Heart left ventricle (tissue), 16 donors: ENCODE measurements at regions of chr5 and their contacts with region 1.

Region 1: GRCh38 chr5:142748568-142749249 is 21.5 kb upstream of the ARHGAP26 start:
- DNase-seq: peak in 3 of 5 donors; percentile 32 to 39 (median 35)
- ATAC-seq: peak in 3 of 4 donors; percentile 29 to 32 (median 30)
- H3K4me3 ChIP-seq: no peak overlapping the region
- H3K27ac ChIP-seq: no peak overlapping the region
- H3K4me1 ChIP-seq: peaks cover 8 to 79% (median 43%) of the 10 kb centered on the region in 12 donors
- H3K27me3 ChIP-seq: no peaks in the 10 kb centered on the region
- CTCF ChIP-seq: peak; percentile 31 to 70 (median 56)
- POLR2A ChIP-seq: no peak

Region 2: GRCh38 chr5:142888469-142889085 is 139.9 kb after region 1 on chr5:
- intact Hi-C with region 1: loop called in 2 of 10 experiments (anchors 10 kb)
- DNase-seq: no peak
- ATAC-seq: peak; percentile 21 to 66 (median 60)
- H3K4me3 ChIP-seq: no peak overlapping the region
- H3K27ac ChIP-seq: no peak overlapping the region
- H3K4me1 ChIP-seq: peaks cover 0 to 47% (median 18%) of the 10 kb centered on the region in 12 donors
- H3K27me3 ChIP-seq: no peaks in the 10 kb centered on the region
- CTCF ChIP-seq: peak; percentile 68 to 87 (median 79)
- POLR2A ChIP-seq: no peak

Region 3: GRCh38 chr5:143037071-143037470 is 288.4 kb after region 1 on chr5:
- intact Hi-C with region 1: no loop called
- DNase-seq: no peak
- ATAC-seq: peak in 3 of 4 donors; percentile 37 to 87 (median 43)
- H3K4me3 ChIP-seq: no peak overlapping the region
- H3K27ac ChIP-seq: peak overlapping the region in 1 of 12 donors; percentile 24
- H3K4me1 ChIP-seq: peaks cover 0 to 21% (median 7%) of the 10 kb centered on the region in 12 donors
- H3K27me3 ChIP-seq: no peaks in the 10 kb centered on the region
- CTCF ChIP-seq: no peak
- POLR2A ChIP-seq: no peak